CD4-positive, alpha-beta memory T cell (primary cell): ENCODE measurements at regions of chr2 and their contacts with region 1.

Region 1: GRCh38 chr2:27628767-27629709 is at the starts of genes CCDC121 and GPN1:
- DNase-seq: peak; percentile 93 to 98 (median 94)
- H3K4me3 ChIP-seq: peak within 1 kb of the TSS; percentile 68 to 92
- H3K4me3 Mint-ChIP-seq: peak within 1 kb of the TSS in 2 of 8 donors; percentile 8 to 57
- H3K27ac ChIP-seq: peak within 1 kb of the TSS; percentile 85
- H3K27ac Mint-ChIP-seq: peak within 1 kb of the TSS in 3 of 7 donors; percentile 76 to 85 (median 78)
- H3K4me1 ChIP-seq: peaks cover 17% of the 10 kb centered on the region
- H3K4me1 Mint-ChIP-seq: peaks cover 9 to 21% (median 11%) of the 10 kb centered on the region in 4 donors
- H3K27me3 ChIP-seq: no peaks in the 10 kb centered on the region
- H3K27me3 Mint-ChIP-seq: no peaks in the 10 kb centered on the region
- total RNA-seq, gene CCDC121: 1.3 to 2.2 TPM
- total RNA-seq, gene GPN1: 28.9 to 32.8 TPM

Region 2: GRCh38 chr2:27356382-27357181 is 272.5 kb before region 1 on chr2 and contains the start of gene GTF3C2:
- CTCF ChIA-PET with region 1: no interaction called
- POLR2A ChIA-PET with region 1: no interaction called
- intact Hi-C with region 1: loop called (anchors 5 kb)
- DNase-seq: peak; percentile 93 to 97 (median 93)
- H3K4me3 ChIP-seq: peak within 1 kb of the TSS; percentile 49 to 75
- H3K4me3 Mint-ChIP-seq: peak within 1 kb of the TSS; percentile 96 to 100 (median 98)
- H3K27ac ChIP-seq: peak within 1 kb of the TSS; percentile 85
- H3K27ac Mint-ChIP-seq: peak within 1 kb of the TSS; percentile 96 to 100 (median 99)
- H3K4me1 ChIP-seq: peaks cover 51% of the 10 kb centered on the region
- H3K4me1 Mint-ChIP-seq: peaks cover 36 to 64% (median 48%) of the 10 kb centered on the region in 4 donors
- H3K27me3 ChIP-seq: no peaks in the 10 kb centered on the region
- H3K27me3 Mint-ChIP-seq: no peaks in the 10 kb centered on the region
- total RNA-seq, gene GTF3C2: 82.9 to 90.8 TPM

Region 3: GRCh38 chr2:27582695-27583389 is 46.2 kb before region 1 on chr2 and contains the start of gene ZNF512:
- CTCF ChIA-PET with region 1: no interaction called
- POLR2A ChIA-PET with region 1: interaction called, 11 read pairs
- intact Hi-C with region 1: no loop called
- DNase-seq: peak; percentile 73 to 81 (median 78)
- H3K4me3 ChIP-seq: peak within 1 kb of the TSS; percentile 59 to 96
- H3K4me3 Mint-ChIP-seq: peak within 1 kb of the TSS; percentile 90 to 100 (median 95)
- H3K27ac ChIP-seq: peak within 1 kb of the TSS; percentile 70
- H3K27ac Mint-ChIP-seq: peak within 1 kb of the TSS; percentile 86 to 99 (median 97)
- H3K4me1 ChIP-seq: peaks cover 50% of the 10 kb centered on the region
- H3K4me1 Mint-ChIP-seq: peaks cover 37 to 67% (median 46%) of the 10 kb centered on the region in 4 donors
- H3K27me3 ChIP-seq: no peaks in the 10 kb centered on the region
- H3K27me3 Mint-ChIP-seq: no peaks in the 10 kb centered on the region
- total RNA-seq, gene ZNF512: 51.9 to 66.2 TPM

Region 4: GRCh38 chr2:27663463-27664249 is 34.6 kb after region 1 on chr2 and contains the starts of genes SLC4A1AP and SUPT7L:
- CTCF ChIA-PET with region 1: interaction called, 4 read pairs
- POLR2A ChIA-PET with region 1: interaction called, 16 read pairs
- intact Hi-C with region 1: loop called (anchors 1 kb)
- DNase-seq: peak; percentile 82 to 85 (median 85)
- H3K4me3 ChIP-seq: peak within 1 kb of the TSS; percentile 99
- H3K4me3 Mint-ChIP-seq: peak within 1 kb of the TSS; percentile 96 to 100 (median 100)
- H3K27ac ChIP-seq: peak within 1 kb of the TSS; percentile 99
- H3K27ac Mint-ChIP-seq: peak within 1 kb of the TSS; percentile 98 to 100 (median 99)
- H3K4me1 ChIP-seq: peaks cover 31% of the 10 kb centered on the region
- H3K4me1 Mint-ChIP-seq: peaks cover 31 to 63% (median 49%) of the 10 kb centered on the region in 4 donors
- H3K27me3 ChIP-seq: no peaks in the 10 kb centered on the region
- H3K27me3 Mint-ChIP-seq: no peaks in the 10 kb centered on the region
- total RNA-seq, gene SLC4A1AP: 24.4 to 26.6 TPM
- total RNA-seq, gene SUPT7L: 45.4 to 48.5 TPM

Region 5: GRCh38 chr2:27914041-27914804 is 285.2 kb after region 1 on chr2:
- CTCF ChIA-PET with region 1: no interaction called
- POLR2A ChIA-PET with region 1: no interaction called
- intact Hi-C with region 1: no loop called
- DNase-seq: no peak
- H3K4me3 ChIP-seq: no peak overlapping the region
- H3K4me3 Mint-ChIP-seq: no peak overlapping the region
- H3K27ac ChIP-seq: no peak overlapping the region
- H3K27ac Mint-ChIP-seq: peak overlapping the region in 5 of 7 donors; percentile 4 to 71 (median 18)
- H3K4me1 ChIP-seq: no peaks in the 10 kb centered on the region
- H3K4me1 Mint-ChIP-seq: peaks cover 4 to 18% (median 11%) of the 10 kb centered on the region in 4 donors
- H3K27me3 ChIP-seq: no peaks in the 10 kb centered on the region
- H3K27me3 Mint-ChIP-seq: no peaks in the 10 kb centered on the region